Breast epithelium (tissue), 4 donors: ENCODE measurements at regions of chr11 and their contacts with region 1.

Region 1: GRCh38 chr11:126303623-126304456 is at the start of gene DCPS:
- DNase-seq: peak; percentile 84 to 85
- H3K4me3 ChIP-seq: peak within 1 kb of the TSS; percentile 55 to 76 (median 60)
- H3K27ac ChIP-seq: peak within 1 kb of the TSS; percentile 90 to 91
- H3K4me1 ChIP-seq: peaks cover 0 to 6% of the 10 kb centered on the region in 2 donors
- H3K27me3 ChIP-seq: no peaks in the 10 kb centered on the region
- CTCF ChIP-seq: no peak
- POLR2A ChIP-seq: peak; percentile 27
- total RNA-seq, gene DCPS: 8.8 to 11.7 (median 9.6) TPM

Region 2: GRCh38 chr11:125784678-125785077 is 519.2 kb before region 1 on chr11:
- intact Hi-C with region 1: no loop called
- DNase-seq: no peak
- H3K4me3 ChIP-seq: no peak overlapping the region
- H3K27ac ChIP-seq: no peak overlapping the region
- H3K4me1 ChIP-seq: no peaks in the 10 kb centered on the region
- H3K27me3 ChIP-seq: no peaks in the 10 kb centered on the region
- CTCF ChIP-seq: no peak
- POLR2A ChIP-seq: no peak

Region 3: DNA sequence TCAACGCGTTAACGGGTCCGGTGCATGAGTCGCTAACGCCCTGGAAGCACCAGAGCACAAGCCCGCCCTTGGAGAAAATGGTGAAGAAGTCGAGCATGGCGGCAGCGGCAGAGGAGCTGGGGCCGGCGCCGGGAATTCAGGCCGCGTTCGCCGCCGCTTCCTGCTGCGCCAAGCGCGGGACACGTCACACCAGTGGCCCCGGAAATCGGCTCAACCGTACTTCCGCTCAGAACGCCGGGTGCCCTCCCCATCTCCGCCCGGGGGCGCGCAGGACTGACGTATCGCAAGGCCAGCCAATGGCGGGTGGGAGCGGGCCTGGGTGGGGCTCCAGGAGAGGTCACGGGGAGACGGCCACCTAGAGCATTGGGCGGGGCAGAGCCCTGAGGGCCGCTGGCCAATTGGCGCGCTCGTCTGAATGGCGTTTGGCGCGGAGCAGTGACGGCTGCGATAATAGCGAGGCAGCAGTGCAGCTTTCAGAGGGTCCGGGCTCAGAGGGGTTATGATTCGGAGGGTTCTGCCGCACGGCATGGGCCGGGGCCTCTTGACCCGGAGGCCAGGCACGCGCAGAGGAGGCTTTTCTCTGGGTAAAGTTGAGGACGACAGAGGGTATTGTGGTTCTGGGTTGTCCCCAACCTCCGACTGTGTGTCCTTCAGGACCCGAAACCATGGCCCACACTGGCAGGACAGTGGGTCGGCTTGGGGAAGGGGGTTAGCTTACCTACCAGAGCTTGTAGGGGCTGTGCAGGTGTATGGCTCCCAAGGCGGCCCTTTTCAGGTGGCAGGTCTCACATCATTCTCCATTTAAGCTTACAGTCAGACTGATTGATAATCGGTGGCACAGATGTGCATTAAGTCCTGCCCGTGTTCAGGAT is 34.9 kb before region 1 on chr11 and contains the starts of genes FOXRED1 and SRPRA:
- intact Hi-C with region 1: loop called (anchors 1 kb)
- DNase-seq: peak; percentile 100
- H3K4me3 ChIP-seq: peak within 1 kb of the TSS; percentile 86 to 89 (median 89)
- H3K27ac ChIP-seq: peak within 1 kb of the TSS; percentile 92
- H3K4me1 ChIP-seq: no peaks in the 10 kb centered on the region
- H3K27me3 ChIP-seq: no peaks in the 10 kb centered on the region
- CTCF ChIP-seq: no peak
- POLR2A ChIP-seq: peak; percentile 76
- total RNA-seq, gene FOXRED1: 13.1 to 23.3 (median 16.6) TPM
- total RNA-seq, gene SRPRA: 75.2 to 90.6 (median 84.9) TPM

Region 4: DNA sequence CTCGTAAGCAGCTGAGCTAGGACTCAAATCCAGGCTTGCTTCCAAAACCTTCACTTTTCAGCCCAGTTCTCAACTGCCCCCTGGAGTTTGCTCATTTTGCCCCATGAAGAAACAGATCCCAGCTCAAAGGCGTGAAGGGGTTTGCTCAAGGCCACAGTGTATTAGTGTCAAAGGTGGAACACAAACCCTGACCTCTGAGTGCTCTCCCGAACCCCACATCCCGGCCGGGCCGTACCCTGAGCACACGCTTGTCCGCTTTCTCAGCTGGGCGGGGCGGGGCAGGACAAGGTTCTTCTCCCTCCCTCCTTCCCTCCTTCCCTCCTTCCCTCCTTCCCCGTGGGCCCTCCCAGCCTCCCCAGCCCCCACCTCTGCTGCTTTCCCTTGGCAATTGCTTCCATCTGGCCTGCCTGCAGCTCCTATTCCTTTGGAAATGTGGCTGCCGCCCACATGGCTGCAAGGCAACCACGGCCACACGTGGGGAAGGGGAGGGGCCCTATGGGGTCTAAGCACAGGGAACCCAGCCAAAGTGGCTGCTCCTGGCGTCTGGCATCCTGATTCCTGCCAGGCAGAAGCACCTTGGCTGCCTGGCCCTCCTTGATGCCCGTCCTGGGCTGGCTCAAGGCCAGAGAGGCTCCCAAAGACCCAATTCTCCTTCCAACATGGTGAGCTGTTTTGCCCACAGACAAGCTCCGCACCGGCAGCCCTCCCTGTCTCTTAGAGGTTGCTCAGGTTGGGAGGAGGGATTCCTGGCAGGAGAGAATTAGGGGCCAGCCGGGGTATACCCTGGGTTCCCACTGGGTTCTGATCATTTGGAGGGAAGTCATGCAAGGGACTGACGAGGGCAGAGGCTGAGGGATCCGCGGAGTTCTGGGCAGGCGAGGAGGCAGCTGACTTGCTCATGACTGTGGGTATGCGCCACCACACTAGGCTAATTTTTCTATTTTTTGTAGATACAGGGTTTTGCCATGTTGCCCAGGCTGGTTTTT is 55.9 kb after region 1 on chr11:
- intact Hi-C with region 1: no loop called
- DNase-seq: peak; percentile 61 to 62
- H3K4me3 ChIP-seq: peak overlapping the region in 2 of 3 donors; percentile 17 to 50
- H3K27ac ChIP-seq: peak overlapping the region; percentile 47 to 83
- H3K4me1 ChIP-seq: peaks cover 4% of the 10 kb centered on the region in 2 donors
- H3K27me3 ChIP-seq: no peaks in the 10 kb centered on the region
- CTCF ChIP-seq: no peak
- POLR2A ChIP-seq: no peak